B cell (primary cell): ENCODE measurements at regions of chr11 and their contacts with region 1.

Region 1: DNA sequence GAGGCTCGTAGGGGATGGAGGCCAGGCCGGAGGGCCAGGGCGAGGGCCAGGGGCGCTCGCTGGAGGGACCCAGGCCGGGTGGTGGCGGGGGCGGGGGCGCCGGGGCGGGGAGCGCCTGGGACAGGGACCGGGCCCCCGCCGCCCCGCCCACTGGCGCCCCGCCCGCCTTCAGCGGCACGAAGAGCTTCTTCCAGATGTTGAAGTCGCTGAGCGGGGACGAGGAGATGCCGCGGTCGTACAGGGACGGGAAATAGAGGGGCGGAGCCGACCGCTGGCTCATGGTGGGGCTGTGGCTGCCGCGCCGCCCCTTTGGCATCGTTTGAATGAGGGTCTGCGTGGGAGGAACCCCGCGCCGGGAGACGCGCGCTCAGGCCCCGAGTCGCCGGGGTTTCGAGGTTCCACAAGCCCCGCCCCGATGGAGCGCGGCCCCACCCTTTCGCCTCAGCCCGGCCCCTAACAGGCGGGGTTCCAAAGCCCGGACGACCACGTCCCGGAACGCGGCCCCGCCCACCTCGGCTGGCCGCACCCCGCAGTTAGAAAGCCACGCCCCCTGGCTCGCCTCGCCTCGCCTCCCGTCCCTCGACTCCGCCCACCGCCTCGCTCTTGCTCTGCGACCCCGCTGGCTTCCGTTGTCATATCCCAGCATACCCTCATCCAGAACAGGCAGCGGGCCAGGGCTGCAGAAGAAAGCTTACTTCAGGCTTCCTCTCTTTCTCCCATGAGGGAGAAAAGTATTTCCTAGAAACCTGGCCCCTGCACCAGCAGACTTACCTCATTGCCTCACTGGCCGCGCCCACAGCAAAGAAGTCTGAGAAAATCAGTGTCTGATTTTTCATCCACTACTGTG is at the start of gene C11orf91:
- DNase-seq: peak; percentile 97
- ATAC-seq: peak; percentile 99
- H3K4me3 ChIP-seq: peak within 1 kb of the TSS; percentile 53 to 74 (median 60)
- H3K4me3 Mint-ChIP-seq: peak within 1 kb of the TSS; percentile 93
- H3K27ac ChIP-seq: no peak within 1 kb of the TSS
- H3K27ac Mint-ChIP-seq: peak within 1 kb of the TSS; percentile 57
- H3K4me1 ChIP-seq: peaks cover 6 to 16% of the 10 kb centered on the region in 2 donors
- H3K4me1 Mint-ChIP-seq: peaks cover 17% of the 10 kb centered on the region
- H3K27me3 ChIP-seq: peaks cover 0 to 14% (median 3%) of the 10 kb centered on the region in 4 experiments
- H3K27me3 Mint-ChIP-seq: peaks cover 5% of the 10 kb centered on the region
- CTCF ChIP-seq: no peak
- total RNA-seq, gene C11orf91: not detected in 2 replicates

Region 2: GRCh38 chr11:33039274-33040032 is 661.2 kb before region 1 on chr11 and contains the start of gene TCP11L1:
- CTCF ChIA-PET with region 1: no interaction called
- POLR2A ChIA-PET with region 1: no interaction called
- intact Hi-C with region 1: loop called (anchors 2 kb)
- DNase-seq: peak; percentile 90
- ATAC-seq: peak; percentile 84
- H3K4me3 ChIP-seq: peak within 1 kb of the TSS; percentile 77 to 99 (median 95)
- H3K4me3 Mint-ChIP-seq: peak within 1 kb of the TSS; percentile 96
- H3K27ac ChIP-seq: peak within 1 kb of the TSS; percentile 79 to 88
- H3K27ac Mint-ChIP-seq: peak within 1 kb of the TSS; percentile 94
- H3K4me1 ChIP-seq: peaks cover 8 to 18% of the 10 kb centered on the region in 2 donors
- H3K4me1 Mint-ChIP-seq: peaks cover 16% of the 10 kb centered on the region
- H3K27me3 ChIP-seq: no peaks in the 10 kb centered on the region
- H3K27me3 Mint-ChIP-seq: peaks cover 8% of the 10 kb centered on the region
- CTCF ChIP-seq: no peak
- total RNA-seq, gene TCP11L1: 19.7 and 19.8 TPM in 2 replicates

Region 3: DNA sequence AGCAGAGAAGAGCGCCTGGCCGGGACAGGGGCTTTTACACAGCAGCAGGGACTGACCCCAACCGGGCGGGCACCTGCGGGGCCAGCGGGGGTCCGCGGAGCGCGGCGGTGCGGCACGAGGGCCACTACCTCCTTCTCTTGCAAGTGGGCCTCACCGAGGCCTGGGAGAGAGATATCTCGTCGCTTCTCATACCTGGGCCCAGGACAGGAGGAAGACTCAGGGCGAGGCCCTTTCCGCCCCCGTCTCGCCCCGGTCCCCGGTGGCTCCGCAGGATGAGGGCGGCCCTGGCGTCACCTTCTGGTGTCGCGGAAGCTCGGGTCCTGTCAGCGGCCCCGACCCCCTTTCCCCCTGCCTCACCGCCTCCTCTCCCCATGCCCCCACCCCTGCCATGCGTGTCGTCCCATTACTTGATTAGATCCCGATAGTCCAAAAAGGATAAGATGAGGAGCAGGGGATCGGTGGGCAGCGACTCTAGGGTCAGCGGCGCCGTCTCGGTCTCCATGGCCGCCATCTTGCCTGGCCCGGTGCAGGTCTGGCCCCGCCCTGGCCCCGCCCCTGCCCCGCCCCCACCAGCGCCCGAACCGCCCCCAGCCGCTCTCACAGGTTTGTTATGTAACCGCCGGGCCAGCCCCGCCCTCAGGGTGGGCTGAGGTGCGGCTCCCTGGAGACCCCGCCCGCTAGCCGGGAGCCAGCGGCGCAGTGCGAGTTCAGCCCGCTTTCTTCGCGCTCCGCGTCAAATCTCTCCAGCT is 73.5 kb after region 1 on chr11 and contains the start of gene FBXO3:
- CTCF ChIA-PET with region 1: interaction called, 3 read pairs
- POLR2A ChIA-PET with region 1: interaction called, 3 read pairs
- intact Hi-C with region 1: loop called (anchors 1 kb)
- DNase-seq: peak; percentile 90
- ATAC-seq: peak; percentile 94
- H3K4me3 ChIP-seq: peak within 1 kb of the TSS; percentile 66 to 91 (median 86)
- H3K4me3 Mint-ChIP-seq: peak within 1 kb of the TSS; percentile 92
- H3K27ac ChIP-seq: peak within 1 kb of the TSS; percentile 57 to 82
- H3K27ac Mint-ChIP-seq: peak within 1 kb of the TSS; percentile 95
- H3K4me1 ChIP-seq: peaks cover 21 to 24% of the 10 kb centered on the region in 2 donors
- H3K4me1 Mint-ChIP-seq: peaks cover 40% of the 10 kb centered on the region
- H3K27me3 ChIP-seq: peaks cover 0 to 22% (median 9%) of the 10 kb centered on the region in 4 experiments
- H3K27me3 Mint-ChIP-seq: peaks cover 19% of the 10 kb centered on the region
- CTCF ChIP-seq: no peak
- total RNA-seq, gene FBXO3: 32.7 and 34.3 TPM in 2 replicates